Activated CD4-positive, alpha-beta memory T cell treated with anti-CD3 and anti-CD28 coated beads, Interleukin-2, amount 10 ng/mL, durations not matched to agents 7 days and 5 days (primary cell): ENCODE measurements at regions of chr5 and their contacts with region 1.

Region 1: DNA sequence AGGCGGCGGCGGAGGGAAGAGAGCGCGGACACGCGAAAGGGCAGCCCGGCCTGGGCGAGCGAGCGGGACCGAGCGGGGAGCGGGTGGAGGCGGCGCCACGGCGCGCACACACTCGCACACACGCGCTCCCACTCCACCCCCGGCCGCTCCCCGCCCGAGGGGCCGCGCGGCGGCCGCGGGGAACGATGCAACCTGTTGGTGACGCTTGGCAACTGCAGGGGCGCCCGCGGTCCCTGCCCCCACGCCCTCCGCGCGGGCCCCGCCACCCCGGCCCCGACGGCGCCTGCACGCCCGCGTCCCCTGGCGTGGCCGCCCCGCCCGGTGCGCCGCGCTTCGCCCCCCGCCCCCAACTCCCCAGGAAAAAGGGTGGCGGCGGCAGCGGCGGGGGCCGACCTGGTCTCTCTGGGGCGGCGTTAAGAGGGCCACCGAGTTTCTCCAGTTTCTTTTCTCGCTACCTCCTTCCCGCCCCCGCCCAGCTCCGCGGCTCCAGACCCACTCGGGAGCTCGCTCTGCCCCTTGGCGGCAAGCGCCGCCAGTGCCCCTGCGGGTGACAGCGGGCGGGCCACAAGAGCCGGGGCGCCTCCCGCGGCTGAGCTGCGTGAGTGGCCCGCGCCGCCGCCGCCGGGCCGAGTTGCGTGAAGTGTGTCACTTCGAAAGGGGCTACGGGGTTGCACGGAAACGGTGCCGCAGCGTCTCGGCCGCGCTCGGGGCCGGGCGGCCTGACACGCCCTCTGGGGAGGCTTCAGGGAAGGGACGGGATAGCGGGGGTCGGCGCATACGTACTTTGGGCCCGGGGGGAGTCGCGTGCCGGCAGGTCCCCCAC is at the start of gene NR3C1:
- DNase-seq: peak; percentile 87
- H3K4me3 Mint-ChIP-seq: peak within 1 kb of the TSS; percentile 78
- H3K27ac Mint-ChIP-seq: peak within 1 kb of the TSS; percentile 97
- H3K4me1 Mint-ChIP-seq: peaks cover 56% of the 10 kb centered on the region
- H3K27me3 Mint-ChIP-seq: no peaks in the 10 kb centered on the region
- total RNA-seq, gene NR3C1: 79.3 to 81.6 TPM

Region 2: GRCh38 chr5:143008809-143009521 is 394.8 kb before region 1 on chr5:
- CTCF ChIA-PET with region 1: interaction called, 57 read pairs
- POLR2A ChIA-PET with region 1: interaction called, 80 read pairs
- DNase-seq: peak; percentile 89
- H3K4me3 Mint-ChIP-seq: peak overlapping the region; percentile 19
- H3K27ac Mint-ChIP-seq: peak overlapping the region; percentile 70
- H3K4me1 Mint-ChIP-seq: peaks cover 67% of the 10 kb centered on the region
- H3K27me3 Mint-ChIP-seq: no peaks in the 10 kb centered on the region

Region 3: DNA sequence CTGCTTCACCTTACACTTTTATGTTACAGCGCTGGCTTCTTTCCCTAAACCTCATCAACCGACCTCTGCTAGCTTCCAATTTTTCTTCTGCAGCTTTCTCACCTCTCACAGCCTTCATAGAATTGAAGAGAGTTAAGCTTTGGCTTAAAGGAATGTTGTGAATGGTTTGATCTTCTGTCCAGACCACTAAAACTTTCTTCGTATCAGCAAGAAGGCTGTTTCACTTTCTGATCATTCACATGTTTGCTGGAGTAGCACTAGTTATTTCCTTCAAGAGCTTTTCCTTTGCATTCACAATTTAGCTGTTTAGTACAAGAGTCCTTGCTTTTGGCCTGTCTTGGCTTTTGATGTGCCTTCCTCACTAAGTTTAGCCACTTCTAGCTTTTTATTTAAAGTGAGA is 49.8 kb before region 1 on chr5:
- CTCF ChIA-PET with region 1: interaction called, 6 read pairs
- POLR2A ChIA-PET with region 1: interaction called, 17 read pairs
- DNase-seq: no peak
- H3K4me3 Mint-ChIP-seq: peak overlapping the region; percentile 70
- H3K27ac Mint-ChIP-seq: peak overlapping the region; percentile 70
- H3K4me1 Mint-ChIP-seq: peaks cover 39% of the 10 kb centered on the region
- H3K27me3 Mint-ChIP-seq: no peaks in the 10 kb centered on the region

Region 4: GRCh38 chr5:143413958-143414669 is 10.3 kb after region 1 on chr5:
- CTCF ChIA-PET with region 1: interaction called, 5 read pairs
- POLR2A ChIA-PET with region 1: interaction called, 27 read pairs
- DNase-seq: no peak
- H3K4me3 Mint-ChIP-seq: peak overlapping the region; percentile 2
- H3K27ac Mint-ChIP-seq: peak overlapping the region; percentile 65
- H3K4me1 Mint-ChIP-seq: peaks cover 53% of the 10 kb centered on the region
- H3K27me3 Mint-ChIP-seq: no peaks in the 10 kb centered on the region

Region 5: DNA sequence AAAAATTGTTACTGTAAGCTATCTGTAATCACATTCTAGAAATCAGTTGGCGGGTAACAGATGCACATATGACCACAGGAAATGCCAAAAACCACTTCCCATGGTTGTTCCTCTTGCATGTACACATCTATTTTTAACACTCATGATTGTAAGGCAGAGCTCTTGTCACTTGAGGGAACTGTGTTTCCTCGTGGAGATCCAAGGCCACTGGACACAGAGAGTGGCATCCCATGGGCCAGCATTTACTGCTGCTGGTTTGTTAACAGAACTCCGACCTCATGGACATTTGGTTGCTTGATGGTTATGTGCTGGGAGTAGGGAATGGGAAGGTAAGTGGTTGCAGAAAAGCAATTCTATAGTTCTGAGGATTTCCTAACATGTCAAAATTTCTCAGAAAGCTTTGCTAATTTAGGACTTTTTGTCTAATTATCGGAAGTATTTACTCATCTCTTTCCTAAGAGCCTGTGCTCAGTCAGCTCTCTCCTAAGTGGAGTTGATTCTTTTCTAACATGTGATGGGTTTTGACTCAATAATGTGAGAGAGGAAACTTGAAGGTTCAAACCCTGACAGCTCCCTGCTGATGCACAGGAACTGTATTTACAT is 201.7 kb after region 1 on chr5:
- CTCF ChIA-PET with region 1: interaction called, 4 read pairs
- POLR2A ChIA-PET with region 1: interaction called, 36 read pairs
- DNase-seq: peak; percentile 69
- H3K4me3 Mint-ChIP-seq: peak overlapping the region; percentile 69
- H3K27ac Mint-ChIP-seq: peak overlapping the region; percentile 97
- H3K4me1 Mint-ChIP-seq: peaks cover 52% of the 10 kb centered on the region
- H3K27me3 Mint-ChIP-seq: no peaks in the 10 kb centered on the region

Region 6: DNA sequence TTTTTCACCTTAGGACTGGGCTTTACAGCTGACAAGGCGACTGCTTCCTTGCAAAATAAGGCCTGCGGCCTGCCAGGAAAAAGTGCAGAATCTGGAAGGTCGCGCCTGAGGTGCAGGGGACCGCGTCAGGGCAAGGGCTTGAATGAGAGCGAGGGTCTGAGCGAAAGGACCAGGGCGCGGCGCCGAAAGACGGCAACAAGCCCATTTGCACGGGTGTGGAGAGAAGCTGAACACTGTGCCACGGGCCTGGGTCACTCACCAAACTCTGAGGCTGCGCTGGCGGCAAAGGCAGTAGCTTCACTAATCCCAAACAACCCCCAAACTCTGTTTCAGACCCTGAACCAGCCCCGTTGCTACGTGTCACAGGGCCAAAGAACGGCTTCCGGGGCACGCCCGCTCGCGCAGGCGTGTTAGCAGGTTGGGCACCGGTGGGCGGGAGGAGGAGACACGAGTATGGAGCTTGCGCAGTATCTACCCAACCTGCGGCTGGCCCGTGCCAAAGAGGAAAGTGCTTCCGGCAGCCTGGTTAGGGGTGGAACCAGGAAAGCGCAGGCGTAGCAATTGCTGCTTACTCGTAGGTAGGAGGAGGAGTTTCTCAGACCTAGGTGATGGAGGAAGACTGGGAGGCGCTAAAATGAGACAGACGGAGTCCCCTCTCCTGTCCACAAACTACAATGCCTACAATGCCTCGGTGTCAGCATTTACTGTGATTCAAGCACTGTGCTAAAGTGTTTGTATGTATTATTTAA is 766.6 kb after region 1 on chr5 and contains the starts of genes KCTD16 and YIPF5:
- CTCF ChIA-PET with region 1: no interaction called
- POLR2A ChIA-PET with region 1: interaction called, 15 read pairs
- DNase-seq: peak; percentile 98
- H3K4me3 Mint-ChIP-seq: peak within 1 kb of the TSS; percentile 99
- H3K27ac Mint-ChIP-seq: peak within 1 kb of the TSS; percentile 87
- H3K4me1 Mint-ChIP-seq: peaks cover 43% of the 10 kb centered on the region
- H3K27me3 Mint-ChIP-seq: peaks cover 9% of the 10 kb centered on the region
- total RNA-seq, gene KCTD16: not detected
- total RNA-seq, gene YIPF5: 45.1 to 47.5 TPM